ENCODE measurements at regions of chr15 and their contacts with region 1.

Region 1: DNA sequence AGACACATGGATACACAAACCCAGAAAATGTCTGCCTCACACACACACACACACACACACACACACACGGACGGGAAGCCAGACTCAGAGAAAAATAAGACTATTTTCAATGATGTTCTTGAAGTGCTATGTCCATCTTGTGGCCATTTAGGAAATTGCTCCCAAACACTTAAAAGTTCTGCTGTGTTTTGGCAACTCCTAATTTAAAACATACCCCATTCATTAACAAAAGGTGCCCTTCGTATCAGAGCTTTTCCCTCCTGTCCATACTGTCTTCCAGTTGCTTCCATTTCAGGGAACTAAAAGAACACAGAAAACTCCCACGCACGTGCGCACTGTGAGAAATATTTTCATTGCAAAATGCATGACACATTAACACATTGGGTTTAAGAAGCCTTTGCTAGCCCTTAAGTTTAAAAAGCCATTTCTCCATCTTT is 44.6 kb downstream of the SLC12A1 start:
- DNase-seq: peak; percentile 17
- ATAC-seq: peak; percentile 66
- H3K4me3 ChIP-seq: no peak overlapping the region
- H3K27ac ChIP-seq: no peak overlapping the region
- H3K4me1 ChIP-seq: no peaks in the 10 kb centered on the region
- H3K27me3 ChIP-seq: no peaks in the 10 kb centered on the region; a peak in 2 of 4 replicates
- CTCF ChIP-seq: peak; percentile 71 to 73 (median 73)
- EP300 ChIP-seq: no peak
- POLR2A ChIP-seq: no peak
- RAD21 ChIP-seq: peak; percentile 70

Region 2: DNA sequence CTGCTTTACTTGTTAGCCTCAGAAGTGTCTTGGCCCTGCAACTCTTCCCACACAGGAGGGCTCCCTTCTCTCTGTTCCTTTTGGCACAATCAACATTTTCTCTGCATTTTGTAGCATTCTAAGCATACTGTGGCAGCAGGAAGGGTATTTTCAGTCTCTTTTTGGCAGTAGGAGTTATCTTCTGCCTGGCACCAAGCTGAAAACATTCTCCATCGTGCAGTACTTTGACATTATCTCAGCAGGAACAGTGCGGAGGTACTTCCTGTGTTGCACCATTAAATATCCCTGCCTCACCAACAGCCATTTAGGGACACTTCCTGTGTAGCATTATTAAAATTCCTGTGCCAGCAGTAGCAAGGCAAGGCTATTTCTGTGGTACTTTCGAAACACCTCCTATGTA is 766.6 kb before region 1 on chr15:
- CTCF ChIA-PET with region 1: no interaction called
- POLR2A ChIA-PET with region 1: no interaction called
- RAD21 ChIA-PET with region 1: no interaction called
- SMC1A ChIA-PET with region 1: no interaction called
- in situ Hi-C with region 1: loop called (anchors 25 kb)
- intact Hi-C with region 1: no loop called
- DNase-seq: no peak
- ATAC-seq: no peak
- H3K4me3 ChIP-seq: no peak overlapping the region
- H3K27ac ChIP-seq: no peak overlapping the region
- H3K4me1 ChIP-seq: no peaks in the 10 kb centered on the region
- H3K27me3 ChIP-seq: no peaks in the 10 kb centered on the region
- CTCF ChIP-seq: no peak
- EP300 ChIP-seq: no peak
- POLR2A ChIP-seq: no peak
- RAD21 ChIP-seq: no peak

Region 3: DNA sequence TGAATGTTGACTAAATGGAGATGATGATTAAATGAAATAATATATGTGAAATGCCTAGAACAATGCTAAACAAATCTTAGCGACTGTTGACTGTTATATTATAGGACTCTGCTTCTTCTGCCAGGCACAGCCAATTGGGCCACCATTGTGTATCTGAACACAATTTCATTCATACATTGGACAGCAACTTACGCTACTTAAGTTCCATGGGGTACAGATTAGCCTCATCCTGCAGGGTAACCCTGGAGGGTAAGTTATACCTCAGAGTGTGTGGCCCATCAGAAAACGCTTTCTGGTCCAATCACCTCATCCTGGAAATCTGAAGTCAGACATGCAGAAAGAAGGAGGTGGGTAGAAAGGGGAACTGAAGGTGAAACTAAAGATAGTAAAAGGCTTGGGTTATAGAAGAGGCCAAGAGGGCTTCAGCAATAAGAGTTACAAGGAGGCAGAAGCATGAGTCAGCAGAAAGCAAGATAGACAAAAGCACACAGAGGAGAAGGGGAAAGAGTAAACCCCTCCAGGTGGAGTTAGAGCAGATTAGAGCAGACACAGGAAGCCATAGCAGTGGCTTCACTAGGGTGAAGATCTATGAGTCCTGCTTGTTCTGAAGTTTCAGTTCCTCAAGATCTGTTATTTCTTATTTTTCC is 249.1 kb before region 1 on chr15:
- CTCF ChIA-PET with region 1: no interaction called
- POLR2A ChIA-PET with region 1: no interaction called
- RAD21 ChIA-PET with region 1: no interaction called
- SMC1A ChIA-PET with region 1: no interaction called
- in situ Hi-C with region 1: no loop called
- intact Hi-C with region 1: loop called (anchors 5 kb)
- DNase-seq: peak; percentile 68
- ATAC-seq: peak; percentile 93
- H3K4me3 ChIP-seq: no peak overlapping the region
- H3K27ac ChIP-seq: peak overlapping the region; percentile 38
- H3K4me1 ChIP-seq: peaks cover 16% of the 10 kb centered on the region
- H3K27me3 ChIP-seq: no peaks in the 10 kb centered on the region
- CTCF ChIP-seq: no peak
- EP300 ChIP-seq: no peak
- POLR2A ChIP-seq: no peak
- RAD21 ChIP-seq: no peak

Measured in GM12878 (cell line).